Activated T-helper 1 cell treated with anti-CD3 and anti-CD28 coated beads, Interleukin-12 subunit alpha, Interleukin-12 subunit beta, Interleukin-2, Interleukin-4 antibody, amounts not matched to agents 30 ng/mL and 10 ng/mL and 1 ng/mL, durations not matched to agents 14 hours and 24 hours and 36 hours (primary cell): ENCODE measurements at regions of chr17 and their contacts with region 1.

Region 1: DNA sequence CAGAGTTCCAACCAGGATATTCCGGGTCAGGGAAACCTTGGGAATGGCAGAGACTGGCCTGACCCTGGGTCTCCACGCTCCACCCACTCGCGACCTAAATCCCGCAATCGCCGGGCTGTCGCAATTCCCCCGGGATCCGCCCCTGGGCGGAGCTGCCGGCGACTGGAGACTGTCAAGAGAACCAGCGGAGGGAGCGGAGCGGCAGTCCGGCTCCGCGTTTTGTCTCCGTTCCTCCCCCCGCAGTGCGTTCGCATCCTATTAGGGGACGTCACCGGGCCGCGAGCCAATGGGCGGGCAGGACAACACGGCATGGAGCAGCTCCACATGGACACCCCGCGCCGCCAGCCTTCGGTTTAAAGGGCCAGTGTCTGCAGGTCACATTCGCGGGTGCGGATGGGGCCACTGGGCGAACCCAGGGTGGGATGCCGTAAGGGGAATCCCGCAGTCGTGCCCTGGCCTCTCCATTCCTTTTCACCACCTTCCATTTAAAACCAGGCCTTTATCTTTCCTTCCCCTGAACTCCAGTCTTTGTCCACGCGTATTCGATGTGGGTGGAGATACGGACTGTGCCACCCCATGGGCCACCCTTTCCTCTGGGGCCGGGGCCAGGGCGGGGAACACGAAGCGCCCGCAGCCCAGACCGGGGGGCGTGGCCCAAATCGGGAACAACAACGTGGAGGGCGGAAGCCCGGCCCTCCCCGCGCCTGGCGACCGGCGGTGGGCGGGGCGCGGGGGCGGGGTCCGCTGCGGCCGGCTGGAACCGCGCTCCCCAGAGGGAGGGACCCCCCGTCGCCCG is 764 bp upstream of the MNT start:
- DNase-seq: peak; percentile 100
- H3K4me3 Mint-ChIP-seq: peak overlapping the region; percentile 93
- H3K27ac Mint-ChIP-seq: peak overlapping the region; percentile 98
- H3K4me1 Mint-ChIP-seq: peaks cover 54% of the 10 kb centered on the region
- H3K27me3 Mint-ChIP-seq: no peaks in the 10 kb centered on the region

Region 2: GRCh38 chr17:1709971-1710806 is 691.4 kb before region 1 on chr17 and contains the start of gene TLCD2:
- intact Hi-C with region 1: no loop called
- DNase-seq: no peak
- H3K4me3 Mint-ChIP-seq: peak within 1 kb of the TSS; percentile 64
- H3K27ac Mint-ChIP-seq: no peak within 1 kb of the TSS
- H3K4me1 Mint-ChIP-seq: peaks cover 14% of the 10 kb centered on the region
- H3K27me3 Mint-ChIP-seq: peaks cover 19% of the 10 kb centered on the region
- total RNA-seq, gene TLCD2: 0.12 and 0.13 TPM in 2 replicates

Region 3: GRCh38 chr17:2049333-2050299 is 352.0 kb before region 1 on chr17:
- intact Hi-C with region 1: loop called (anchors 2 kb)
- DNase-seq: peak; percentile 91
- H3K4me3 Mint-ChIP-seq: peak overlapping the region; percentile 80
- H3K27ac Mint-ChIP-seq: peak overlapping the region; percentile 82
- H3K4me1 Mint-ChIP-seq: peaks cover 35% of the 10 kb centered on the region
- H3K27me3 Mint-ChIP-seq: peaks cover 12% of the 10 kb centered on the region

Region 4: GRCh38 chr17:2292100-2292499 is 109.5 kb before region 1 on chr17:
- intact Hi-C with region 1: no loop called
- DNase-seq: no peak
- H3K4me3 Mint-ChIP-seq: no peak overlapping the region
- H3K27ac Mint-ChIP-seq: no peak overlapping the region
- H3K4me1 Mint-ChIP-seq: peaks cover 34% of the 10 kb centered on the region
- H3K27me3 Mint-ChIP-seq: no peaks in the 10 kb centered on the region

Region 5: DNA sequence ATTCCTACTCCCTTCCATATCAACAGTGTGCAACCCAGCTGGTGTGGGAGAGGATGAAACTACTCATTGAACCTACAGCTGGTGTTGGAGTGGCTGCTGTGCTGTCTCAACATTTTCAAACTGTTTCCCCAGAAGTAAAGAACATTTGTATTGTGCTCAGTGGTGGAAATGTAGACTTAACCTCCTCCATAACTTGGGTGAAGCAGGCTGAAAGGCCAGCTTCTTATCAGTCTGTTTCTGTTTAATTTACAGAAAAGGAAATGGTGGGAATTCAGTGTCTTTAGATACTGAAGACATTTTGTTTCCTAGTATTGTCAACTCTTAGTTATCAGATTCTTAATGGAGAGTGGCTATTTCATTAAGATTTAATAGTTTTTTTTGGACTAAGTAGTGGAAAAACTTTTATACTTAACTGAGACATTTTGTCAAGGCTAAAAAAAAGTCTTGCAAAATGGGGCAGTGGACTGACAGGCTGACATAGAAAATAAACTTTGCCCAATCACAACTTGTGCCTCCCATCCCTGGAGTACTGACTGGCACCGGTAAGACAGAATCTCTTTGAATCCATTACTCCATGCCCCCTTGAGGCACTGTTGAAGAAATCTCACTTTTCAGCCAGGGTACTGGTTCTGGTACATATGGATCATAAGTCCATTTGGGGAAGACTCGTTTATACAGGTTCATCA is 77.9 kb before region 1 on chr17:
- intact Hi-C with region 1: no loop called
- DNase-seq: no peak
- H3K4me3 Mint-ChIP-seq: no peak overlapping the region
- H3K27ac Mint-ChIP-seq: no peak overlapping the region
- H3K4me1 Mint-ChIP-seq: no peaks in the 10 kb centered on the region
- H3K27me3 Mint-ChIP-seq: no peaks in the 10 kb centered on the region

Region 6: DNA sequence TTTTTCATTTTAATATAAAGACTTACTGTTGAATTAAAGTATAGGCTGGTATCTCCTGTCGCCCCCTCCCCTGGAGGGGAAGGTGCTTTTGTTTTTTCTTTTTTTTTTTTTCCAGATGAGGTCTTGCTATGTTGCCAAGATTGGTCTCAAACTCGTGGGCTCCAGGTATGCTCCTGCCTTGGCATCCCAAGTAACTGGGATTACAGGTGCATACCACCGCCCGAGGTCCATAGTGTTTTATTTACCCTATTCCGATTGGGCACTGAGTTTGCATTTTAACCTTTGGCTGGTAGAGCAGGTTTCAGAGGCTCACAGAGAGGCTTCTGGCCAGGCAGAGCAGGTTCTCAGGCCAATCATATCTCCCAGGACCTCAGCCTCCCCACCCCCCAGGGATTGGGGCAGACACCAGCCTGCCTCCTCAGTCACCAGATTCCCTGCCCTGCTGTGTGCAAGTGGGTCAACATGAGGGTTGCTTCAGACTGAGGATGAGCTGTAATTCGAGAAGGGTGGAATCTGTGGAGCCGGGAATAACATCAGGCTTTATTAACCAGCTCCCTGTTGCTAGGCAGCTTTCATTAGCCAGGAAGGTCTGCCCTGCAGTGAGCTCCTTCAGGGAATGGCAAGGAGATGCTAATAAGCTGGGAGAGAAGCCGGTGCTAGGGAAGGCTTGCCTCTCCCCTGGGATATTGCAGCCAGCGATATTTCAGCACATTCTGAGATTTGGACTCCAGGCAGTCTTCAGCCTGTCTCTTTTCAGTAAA is 53.9 kb before region 1 on chr17:
- intact Hi-C with region 1: loop called (anchors 2 kb)
- DNase-seq: no peak
- H3K4me3 Mint-ChIP-seq: no peak overlapping the region
- H3K27ac Mint-ChIP-seq: no peak overlapping the region
- H3K4me1 Mint-ChIP-seq: no peaks in the 10 kb centered on the region
- H3K27me3 Mint-ChIP-seq: peaks cover 2% of the 10 kb centered on the region

Region 7: GRCh38 chr17:2416010-2416734 is 14.5 kb after region 1 on chr17:
- intact Hi-C with region 1: loop called (anchors 1 kb)
- DNase-seq: peak; percentile 78
- H3K4me3 Mint-ChIP-seq: no peak overlapping the region
- H3K27ac Mint-ChIP-seq: no peak overlapping the region
- H3K4me1 Mint-ChIP-seq: no peaks in the 10 kb centered on the region
- H3K27me3 Mint-ChIP-seq: no peaks in the 10 kb centered on the region

Region 8: GRCh38 chr17:2711601-2712299 is 310.1 kb after region 1 on chr17 and contains the start of gene CLUH:
- intact Hi-C with region 1: loop called (anchors 1 kb)
- DNase-seq: peak; percentile 96
- H3K4me3 Mint-ChIP-seq: peak within 1 kb of the TSS; percentile 95
- H3K27ac Mint-ChIP-seq: peak within 1 kb of the TSS; percentile 92
- H3K4me1 Mint-ChIP-seq: peaks cover 32% of the 10 kb centered on the region
- H3K27me3 Mint-ChIP-seq: no peaks in the 10 kb centered on the region
- total RNA-seq, gene CLUH: 173 and 179 TPM in 2 replicates